ENCODE measurements at regions of chr15 and their contacts with region 1.

Region 1: DNA sequence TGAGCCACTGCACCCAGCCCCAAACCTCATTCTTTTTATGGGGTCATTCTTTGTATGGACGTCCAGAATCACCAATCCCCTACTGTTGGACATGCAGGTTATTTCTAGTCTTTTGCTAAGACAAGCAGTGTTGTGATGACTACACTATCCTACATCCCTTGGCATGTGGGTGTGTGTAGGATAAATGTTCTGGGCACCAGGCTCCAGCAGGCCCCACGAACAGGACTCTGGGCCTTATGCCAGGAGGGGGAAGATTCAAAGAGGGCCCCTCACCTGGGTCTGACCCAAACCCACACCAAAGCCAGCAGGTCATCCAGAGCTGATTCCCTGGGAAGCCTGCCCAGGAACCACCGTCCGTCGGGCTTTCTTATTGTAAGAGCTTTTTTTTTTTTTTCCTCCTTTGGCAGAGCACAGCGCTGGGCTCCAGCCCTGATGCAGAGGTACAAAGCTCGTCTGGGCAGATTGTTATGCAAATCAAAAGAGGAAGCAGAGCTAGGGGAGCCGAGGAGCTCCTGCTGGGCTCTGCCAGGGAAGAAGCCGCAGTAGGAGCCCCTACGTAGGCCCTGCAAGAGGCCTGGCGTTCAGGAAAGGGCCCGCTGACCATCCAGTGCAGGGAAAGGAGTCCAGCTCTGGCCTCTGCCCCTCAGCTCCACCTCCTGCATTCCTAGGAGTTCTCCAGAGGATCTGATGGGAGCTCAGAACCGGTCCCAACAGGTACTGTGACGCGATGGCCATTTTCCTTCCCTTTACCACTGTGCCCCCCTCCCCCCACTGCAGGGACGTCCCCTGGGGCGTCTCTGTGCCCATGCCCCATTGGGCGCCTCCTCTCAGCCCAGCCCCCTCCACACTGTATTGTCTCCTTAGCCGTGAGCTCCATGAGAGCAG is 29.0 kb upstream of the FURIN start:
- DNase-seq: peak in 1 of 10 donors; percentile 31
- ATAC-seq: no peak
- H3K4me3 Mint-ChIP-seq: peak overlapping the region; percentile 28 to 79 (median 66)
- H3K27ac Mint-ChIP-seq: peak overlapping the region; percentile 19 to 98 (median 95)
- H3K4me1 Mint-ChIP-seq: peaks cover 17 to 63% (median 36%) of the 10 kb centered on the region in 4 donors
- H3K27me3 Mint-ChIP-seq: no peaks in the 10 kb centered on the region

Region 2: GRCh38 chr15:90799639-90800170 is 39.7 kb before region 1 on chr15:
- POLR2A ChIA-PET with region 1: no interaction called
- DNase-seq: no peak
- ATAC-seq: no peak
- H3K4me3 Mint-ChIP-seq: no peak overlapping the region
- H3K27ac Mint-ChIP-seq: peak overlapping the region in 1 of 10 donors; percentile 2
- H3K4me1 Mint-ChIP-seq: peaks cover 0 to 2% (median 0%) of the 10 kb centered on the region in 4 donors
- H3K27me3 Mint-ChIP-seq: no peaks in the 10 kb centered on the region

Region 3: GRCh38 chr15:90851114-90851513 is 11.7 kb after region 1 on chr15:
- POLR2A ChIA-PET with region 1: interaction called, 27 read pairs
- DNase-seq: peak in 1 of 10 donors; percentile 32
- ATAC-seq: peak; percentile 41 to 65
- H3K4me3 Mint-ChIP-seq: peak overlapping the region in 8 of 10 donors; percentile 28 to 74 (median 61)
- H3K27ac Mint-ChIP-seq: peak overlapping the region in 7 of 10 donors; percentile 0 to 56 (median 34)
- H3K4me1 Mint-ChIP-seq: peaks cover 19 to 57% (median 47%) of the 10 kb centered on the region in 4 donors
- H3K27me3 Mint-ChIP-seq: no peaks in the 10 kb centered on the region

Region 4: DNA sequence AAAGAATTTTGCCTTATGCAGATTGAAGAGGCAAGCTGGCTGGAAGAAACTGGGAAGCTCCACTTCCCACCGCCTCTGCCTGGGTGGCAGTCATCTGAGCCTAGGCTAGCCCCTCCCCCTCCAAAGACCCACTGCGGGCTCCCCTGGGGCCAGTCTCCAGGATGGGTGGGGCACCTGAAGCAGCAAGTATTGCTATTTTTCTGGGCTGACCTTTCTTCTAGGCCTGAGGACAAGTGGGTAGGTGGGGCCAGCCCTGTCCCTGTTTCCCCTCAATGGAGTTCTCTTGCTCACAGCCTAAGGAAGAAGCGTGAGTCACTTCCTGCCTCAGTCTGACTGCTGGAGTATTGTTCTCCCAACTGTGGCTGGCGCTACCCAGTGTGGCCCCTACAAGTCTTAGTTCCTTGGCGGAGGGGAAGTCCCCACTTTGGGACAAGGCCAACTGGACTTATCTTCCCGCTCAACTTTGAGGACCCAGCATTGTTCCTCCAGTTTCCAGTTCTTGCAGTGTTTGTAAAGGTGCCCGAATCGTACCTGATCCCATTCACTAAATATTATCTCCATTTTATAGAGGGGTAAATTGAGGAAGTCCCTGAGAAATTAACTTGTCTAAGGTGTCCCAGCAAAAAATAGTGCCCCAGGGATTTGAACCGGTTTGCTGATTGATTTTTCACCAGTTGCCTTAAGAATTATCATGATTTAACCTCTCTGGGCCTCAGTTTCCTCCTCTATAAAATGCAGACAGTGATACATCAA is 30.3 kb after region 1 on chr15:
- POLR2A ChIA-PET with region 1: interaction called, 13 read pairs
- DNase-seq: peak in 3 of 10 donors; percentile 23 to 57 (median 28)
- ATAC-seq: peak; percentile 15 to 24
- H3K4me3 Mint-ChIP-seq: peak overlapping the region; percentile 78 to 95 (median 88)
- H3K27ac Mint-ChIP-seq: peak overlapping the region; percentile 83 to 97 (median 92)
- H3K4me1 Mint-ChIP-seq: peaks cover 18 to 52% (median 40%) of the 10 kb centered on the region in 4 donors
- H3K27me3 Mint-ChIP-seq: no peaks in the 10 kb centered on the region